Cardiac septum (tissue), 1 donor: ENCODE measurements at regions of chr22 and their contacts with region 1.

Region 1: GRCh38 chr22:34414484-34415440 is 494.5 kb upstream of the LARGE1 start:
- DNase-seq: no peak

Region 2: GRCh38 chr22:33932997-33933396 is 481.8 kb before region 1 on chr22:
- intact Hi-C with region 1: no loop called
- DNase-seq: no peak

Region 3: GRCh38 chr22:34370711-34371110 is 44.1 kb before region 1 on chr22:
- intact Hi-C with region 1: no loop called
- DNase-seq: no peak

Region 4: DNA sequence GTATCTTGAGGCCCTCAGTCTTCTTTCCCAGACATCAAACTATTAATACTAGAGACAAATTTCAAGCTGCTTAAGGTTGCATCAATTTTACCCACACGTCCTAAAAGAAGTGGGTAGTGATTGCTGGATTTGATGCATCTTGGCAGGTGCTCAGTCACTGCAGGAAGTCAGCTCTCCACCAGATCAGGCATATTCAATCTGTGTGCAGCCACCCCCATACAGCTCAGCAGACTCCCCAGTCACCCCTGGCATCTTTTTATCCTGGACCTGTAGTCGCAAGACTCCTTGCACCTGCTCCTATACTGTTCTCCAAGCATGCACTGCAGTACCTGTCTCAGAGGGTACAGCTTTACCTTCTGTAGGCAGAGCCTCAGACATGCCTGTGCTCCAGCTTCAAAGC is 308.1 kb after region 1 on chr22:
- intact Hi-C with region 1: no loop called
- DNase-seq: no peak

Region 5: GRCh38 chr22:35023692-35024363 is 609.1 kb after region 1 on chr22:
- intact Hi-C with region 1: loop called (anchors 5 kb)
- DNase-seq: peak; percentile 80

Region 6: GRCh38 chr22:35150183-35151107 is 735.7 kb after region 1 on chr22:
- intact Hi-C with region 1: loop called (anchors 10 kb)
- DNase-seq: no peak